ENCODE measurements at regions of chr10 and their contacts with region 1.

Region 1: DNA sequence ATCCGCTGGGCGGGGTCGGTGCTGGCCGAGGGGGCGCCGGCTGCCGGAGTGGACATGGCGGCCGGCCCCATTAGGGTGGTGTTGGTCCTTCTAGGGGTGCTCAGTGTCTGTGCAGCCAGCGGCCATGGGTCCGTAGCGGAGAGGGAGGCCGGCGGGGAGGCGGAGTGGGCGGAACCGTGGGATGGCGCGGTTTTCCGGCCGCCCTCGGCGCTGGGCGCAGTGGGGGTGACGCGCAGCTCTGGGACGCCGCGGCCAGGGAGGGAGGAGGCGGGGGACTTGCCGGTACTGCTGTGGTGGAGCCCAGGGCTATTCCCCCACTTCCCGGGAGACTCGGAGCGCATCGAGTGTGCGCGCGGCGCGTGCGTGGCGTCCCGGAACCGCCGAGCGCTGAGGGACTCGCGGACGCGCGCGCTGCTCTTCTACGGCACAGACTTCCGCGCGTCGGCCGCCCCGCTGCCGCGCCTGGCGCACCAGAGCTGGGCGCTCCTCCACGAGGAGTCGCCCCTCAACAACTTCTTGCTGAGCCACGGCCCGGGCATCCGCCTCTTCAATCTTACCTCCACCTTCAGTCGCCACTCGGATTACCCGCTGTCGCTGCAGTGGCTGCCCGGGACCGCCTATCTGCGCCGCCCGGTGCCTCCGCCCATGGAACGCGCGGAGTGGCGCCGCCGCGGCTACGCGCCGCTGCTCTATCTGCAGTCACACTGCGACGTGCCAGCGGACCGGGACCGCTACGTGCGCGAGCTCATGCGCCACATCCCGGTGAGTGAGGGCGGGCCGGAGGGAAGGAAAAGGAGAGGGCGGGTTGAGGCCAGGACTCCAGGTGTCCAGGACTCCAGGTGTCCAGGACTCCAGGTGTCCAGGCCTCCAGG is 9.3 kb upstream of the CHCHD1 start:
- DNase-seq: peak; percentile 82
- H3K4me3 ChIP-seq: peak overlapping the region; percentile 82
- H3K27ac ChIP-seq: peak overlapping the region; percentile 77
- H3K4me1 ChIP-seq: peaks cover 59% of the 10 kb centered on the region
- CTCF ChIP-seq: peak; percentile 45; the same call in 1 of the 2 replicates

Region 2: GRCh38 chr10:72435570-72435969 is 1336.9 kb before region 1 on chr10:
- CTCF ChIA-PET with region 1: no interaction called
- POLR2A ChIA-PET with region 1: no interaction called
- intact Hi-C with region 1: no loop called
- DNase-seq: no peak
- H3K4me3 ChIP-seq: no peak overlapping the region
- H3K27ac ChIP-seq: no peak overlapping the region
- H3K4me1 ChIP-seq: no peaks in the 10 kb centered on the region
- CTCF ChIP-seq: no peak

Region 3: GRCh38 chr10:73506491-73506890 is 266.0 kb before region 1 on chr10:
- CTCF ChIA-PET with region 1: no interaction called
- POLR2A ChIA-PET with region 1: no interaction called
- intact Hi-C with region 1: no loop called
- DNase-seq: no peak
- H3K4me3 ChIP-seq: no peak overlapping the region
- H3K27ac ChIP-seq: no peak overlapping the region
- H3K4me1 ChIP-seq: peaks cover 7% of the 10 kb centered on the region
- CTCF ChIP-seq: no peak

Region 4: DNA sequence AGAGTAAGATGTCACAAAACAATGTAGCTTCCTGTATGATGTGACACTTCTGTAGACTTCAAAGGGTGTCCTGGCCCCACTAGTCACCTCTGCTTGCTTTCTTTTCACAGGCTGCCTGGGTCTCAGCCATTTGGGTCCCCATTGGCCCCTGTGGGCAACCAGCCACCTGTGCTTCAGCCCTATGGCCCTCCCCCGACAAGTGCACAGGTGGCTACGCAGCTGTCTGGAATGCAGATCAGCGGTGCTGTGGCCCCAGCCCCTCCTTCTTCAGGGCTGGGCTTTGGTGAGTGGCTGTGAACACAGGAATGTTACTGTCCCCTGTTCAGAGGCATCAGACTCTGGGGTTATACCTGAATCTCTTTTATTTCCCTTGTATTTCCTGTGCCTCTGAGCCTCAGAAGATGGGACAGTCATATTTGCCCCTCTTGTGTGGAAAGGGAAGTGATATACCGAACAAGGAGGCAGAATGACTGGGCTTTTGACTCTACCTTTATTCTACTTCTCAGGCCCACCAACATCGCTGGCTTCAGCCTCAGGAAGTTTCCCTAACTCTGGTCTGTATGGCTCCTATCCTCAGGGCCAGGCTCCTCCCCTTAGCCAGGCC is 12.9 kb before region 1 on chr10:
- CTCF ChIA-PET with region 1: no interaction called
- POLR2A ChIA-PET with region 1: interaction called, 10 read pairs
- intact Hi-C with region 1: no loop called
- DNase-seq: peak; percentile 86
- H3K4me3 ChIP-seq: no peak overlapping the region
- H3K27ac ChIP-seq: peak overlapping the region; percentile 64
- H3K4me1 ChIP-seq: peaks cover 23% of the 10 kb centered on the region
- CTCF ChIP-seq: no peak

Region 5: GRCh38 chr10:73785221-73785720 is 12.8 kb after region 1 on chr10 and contains the start of gene ZSWIM8:
- CTCF ChIA-PET with region 1: interaction called, 5 read pairs
- POLR2A ChIA-PET with region 1: interaction called, 27 read pairs
- intact Hi-C with region 1: no loop called
- DNase-seq: peak; percentile 95
- H3K4me3 ChIP-seq: peak within 1 kb of the TSS; percentile 83
- H3K27ac ChIP-seq: peak within 1 kb of the TSS; percentile 67
- H3K4me1 ChIP-seq: peaks cover 32% of the 10 kb centered on the region
- CTCF ChIP-seq: no peak
- total RNA-seq, gene ZSWIM8: 22.0 and 22.6 TPM in 2 replicates

Measured in OCI-LY7 (cell line).